ENCODE measurements at regions of chr10 and their contacts with region 1.

Region 1: DNA sequence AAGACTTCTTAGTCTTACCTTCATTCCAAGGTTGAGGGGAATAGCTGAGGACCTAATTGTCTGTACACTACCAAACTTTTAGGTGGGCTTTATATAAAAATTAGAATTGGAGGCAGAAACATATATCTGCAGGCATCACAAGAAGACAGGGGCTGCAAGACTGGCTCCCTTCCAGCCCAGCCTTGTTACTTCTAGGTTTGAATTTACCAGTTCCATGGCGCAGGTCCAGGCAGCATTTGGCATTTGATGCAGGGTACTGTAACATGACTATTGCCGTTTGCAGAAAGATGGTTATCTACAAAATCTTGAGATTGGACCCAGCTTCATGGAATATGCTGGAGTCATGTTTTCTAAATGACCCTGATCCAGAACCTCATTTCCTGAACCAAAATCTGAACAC is 105.4 kb upstream of the RHOBTB1 start:
- DNase-seq: no peak
- ATAC-seq: no peak
- H3K4me3 ChIP-seq: no peak overlapping the region
- H3K27ac ChIP-seq: no peak overlapping the region
- H3K4me1 ChIP-seq: no peaks in the 10 kb centered on the region; the same call in 1 of the 2 replicates
- H3K27me3 ChIP-seq: peaks cover 16% of the 10 kb centered on the region; the same call in 1 of the 2 replicates
- CTCF ChIP-seq: no peak

Region 2: DNA sequence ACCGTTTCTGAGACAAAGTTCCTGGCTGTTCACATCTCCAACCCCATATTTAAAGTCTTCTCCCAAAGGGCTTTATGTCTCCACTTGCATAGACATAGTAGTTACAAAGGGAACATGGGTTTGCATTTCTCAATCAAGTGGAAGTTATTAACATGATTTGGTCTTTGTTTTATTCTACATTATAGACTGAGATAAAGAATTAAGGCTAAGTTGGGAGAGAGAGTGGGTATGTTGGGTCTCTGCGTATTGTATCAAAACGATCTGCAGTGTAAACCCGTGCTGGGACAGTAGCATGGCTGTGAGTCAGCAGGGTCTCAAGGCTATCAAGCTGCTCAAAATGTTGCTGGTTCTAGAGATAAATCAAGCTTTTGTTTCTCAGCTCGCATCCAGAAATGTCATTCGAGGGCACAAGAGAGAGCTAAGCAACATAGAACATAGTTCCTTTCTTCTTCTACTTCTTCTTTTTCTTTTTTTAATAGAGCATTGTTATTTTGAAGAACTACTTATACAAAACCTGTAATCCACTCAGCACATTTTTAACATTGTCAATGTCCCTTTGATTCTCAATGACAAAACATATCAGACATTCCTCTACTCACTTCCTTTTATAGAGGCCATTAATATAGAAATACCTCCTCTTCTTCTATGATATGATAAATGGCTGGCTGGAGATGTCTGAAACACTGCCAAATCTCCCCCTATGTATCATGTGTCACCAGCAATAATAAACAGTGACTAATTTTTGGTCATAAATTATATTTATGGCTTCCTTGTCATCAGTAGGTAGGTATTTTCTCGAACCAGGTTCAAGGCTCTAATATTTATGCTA is 70.9 kb before region 1 on chr10:
- CTCF ChIA-PET with region 1: no interaction called
- POLR2A ChIA-PET with region 1: interaction called, 11 read pairs
- intact Hi-C with region 1: no loop called
- DNase-seq: peak; percentile 99
- ATAC-seq: peak; percentile 64
- H3K4me3 ChIP-seq: no peak overlapping the region
- H3K27ac ChIP-seq: peak overlapping the region; percentile 32
- H3K4me1 ChIP-seq: peaks cover 67% of the 10 kb centered on the region
- H3K27me3 ChIP-seq: no peaks in the 10 kb centered on the region
- CTCF ChIP-seq: no peak